Endothelial cell of umbilical vein (primary cell): ENCODE measurements at regions of chr5 and their contacts with region 1.

Region 1: GRCh38 chr5:124649491-124650146 is 96.8 kb downstream of the ZNF608 start:
- DNase-seq: peak; percentile 98
- H3K4me3 ChIP-seq: peak overlapping the region in 2 of 3 experiments; percentile 17 to 49
- H3K27ac ChIP-seq: peak overlapping the region; percentile 92
- H3K4me1 ChIP-seq: peaks cover 46% of the 10 kb centered on the region
- H3K27me3 ChIP-seq: no peaks in the 10 kb centered on the region
- CTCF ChIP-seq: no peak
- POLR2A ChIP-seq: peak; percentile 60

Region 2: DNA sequence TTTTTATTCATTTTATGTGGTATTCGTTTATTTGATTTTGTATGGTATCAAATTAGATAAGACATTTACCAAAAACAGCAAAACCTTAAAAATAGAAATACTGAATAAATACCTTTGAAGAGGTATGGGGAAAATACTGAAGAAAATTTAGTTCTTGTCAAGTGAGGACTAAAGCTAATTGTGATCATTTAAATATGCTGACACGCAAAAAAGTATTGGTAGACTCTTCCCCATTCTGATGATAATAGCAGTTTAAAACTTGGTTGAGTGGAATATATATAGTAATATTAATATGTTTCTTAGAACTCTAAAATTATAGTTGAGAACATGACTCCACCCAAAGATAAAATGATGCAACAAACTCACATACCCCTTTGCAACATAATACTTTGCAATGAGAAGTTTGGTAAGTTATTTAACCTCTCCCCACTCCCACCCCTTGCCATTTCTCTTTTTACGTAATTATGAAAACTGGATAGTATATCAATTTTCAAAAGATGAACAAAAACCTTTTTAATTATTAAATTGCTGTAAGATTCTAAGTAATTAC is 1834.3 kb before region 1 on chr5:
- CTCF ChIA-PET with region 1: no interaction called
- POLR2A ChIA-PET with region 1: no interaction called
- dilution Hi-C with region 1: no loop called
- intact Hi-C with region 1: no loop called
- DNase-seq: no peak
- H3K4me3 ChIP-seq: no peak overlapping the region
- H3K27ac ChIP-seq: no peak overlapping the region
- H3K4me1 ChIP-seq: no peaks in the 10 kb centered on the region
- H3K27me3 ChIP-seq: no peaks in the 10 kb centered on the region
- CTCF ChIP-seq: no peak
- POLR2A ChIP-seq: no peak

Region 3: GRCh38 chr5:123881759-123882244 is 767.8 kb before region 1 on chr5:
- CTCF ChIA-PET with region 1: no interaction called
- POLR2A ChIA-PET with region 1: no interaction called
- dilution Hi-C with region 1: no loop called
- intact Hi-C with region 1: loop called (anchors 2 kb)
- DNase-seq: peak; percentile 90
- H3K4me3 ChIP-seq: peak overlapping the region in 1 of 3 experiments; percentile 58
- H3K27ac ChIP-seq: peak overlapping the region; percentile 48
- H3K4me1 ChIP-seq: peaks cover 27% of the 10 kb centered on the region
- H3K27me3 ChIP-seq: peaks cover 3 to 7% of the 10 kb centered on the region in 2 experiments
- CTCF ChIP-seq: no peak
- POLR2A ChIP-seq: no peak

Region 4: DNA sequence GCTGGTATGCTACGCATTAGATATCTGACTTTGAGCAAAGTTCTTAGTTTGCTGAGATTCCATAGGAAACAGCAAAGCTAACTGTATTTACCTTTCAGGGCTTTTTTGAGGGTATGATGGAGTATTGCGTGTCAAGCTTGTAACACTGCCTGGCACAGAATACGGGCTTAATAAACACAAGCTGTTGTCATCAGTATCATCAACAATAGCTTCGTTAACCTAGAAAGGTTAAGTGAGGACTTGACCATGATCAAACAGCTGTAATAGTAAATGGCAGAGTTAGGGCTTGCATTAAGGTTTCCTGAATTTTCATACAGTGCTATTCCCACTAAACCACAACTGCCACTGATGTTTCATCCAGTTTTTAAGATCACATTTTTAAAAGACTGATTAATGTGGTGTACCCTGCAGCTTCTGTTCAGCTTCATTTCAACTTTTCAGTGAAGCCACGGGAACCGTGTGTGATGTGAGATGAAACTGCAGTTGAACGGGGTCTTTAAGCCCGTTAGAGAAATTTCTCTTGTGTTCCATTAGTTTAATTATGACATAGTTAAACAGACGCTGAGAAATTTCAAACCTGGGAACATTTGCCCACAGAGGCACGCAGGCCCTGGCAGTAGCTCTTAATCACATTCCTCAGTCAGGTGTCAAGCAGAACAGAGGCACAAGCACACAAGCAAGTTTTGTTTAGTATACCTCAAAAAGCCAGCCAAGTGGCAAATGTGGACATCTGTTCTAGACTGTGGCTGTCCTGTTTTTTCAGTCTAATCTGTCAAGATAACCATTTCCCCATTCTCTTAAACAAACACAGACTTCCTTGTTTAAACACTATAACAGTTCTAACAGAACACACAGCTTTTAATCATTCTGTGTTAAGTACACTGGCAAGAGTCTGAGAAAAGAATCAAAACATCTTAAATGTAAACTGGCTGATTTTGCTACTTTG is 50.3 kb before region 1 on chr5:
- CTCF ChIA-PET with region 1: interaction called, 14 read pairs
- POLR2A ChIA-PET with region 1: interaction called, 27 read pairs
- dilution Hi-C with region 1: no loop called
- intact Hi-C with region 1: loop called (anchors 1 kb)
- DNase-seq: peak; percentile 98
- H3K4me3 ChIP-seq: peak overlapping the region in 1 of 3 experiments; percentile 41
- H3K27ac ChIP-seq: peak overlapping the region; percentile 99
- H3K4me1 ChIP-seq: peaks cover 63% of the 10 kb centered on the region
- H3K27me3 ChIP-seq: no peaks in the 10 kb centered on the region
- CTCF ChIP-seq: no peak
- POLR2A ChIP-seq: peak; percentile 78

Region 5: DNA sequence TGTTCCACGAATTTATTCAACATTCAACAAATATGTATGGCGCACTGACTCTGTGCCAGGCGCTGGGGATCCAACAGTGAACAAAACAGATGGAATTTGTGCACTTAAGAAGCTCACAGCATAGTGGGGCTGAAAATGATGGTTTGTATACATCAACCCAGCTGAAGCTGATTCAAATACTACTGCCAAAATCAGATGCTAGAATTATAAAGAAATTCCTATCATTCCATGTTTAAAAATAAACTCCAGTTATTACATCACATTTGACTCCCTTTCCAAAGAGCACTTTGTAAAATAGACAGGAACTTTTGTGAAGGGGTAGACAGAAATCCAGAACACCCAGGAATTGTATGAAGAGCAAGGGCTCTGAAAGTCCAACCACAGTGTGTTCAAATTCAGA is 42.7 kb after region 1 on chr5:
- CTCF ChIA-PET with region 1: no interaction called
- POLR2A ChIA-PET with region 1: no interaction called
- dilution Hi-C with region 1: no loop called
- intact Hi-C with region 1: no loop called
- DNase-seq: no peak
- H3K4me3 ChIP-seq: no peak overlapping the region
- H3K27ac ChIP-seq: no peak overlapping the region
- H3K4me1 ChIP-seq: no peaks in the 10 kb centered on the region
- H3K27me3 ChIP-seq: no peaks in the 10 kb centered on the region
- CTCF ChIP-seq: no peak
- POLR2A ChIP-seq: no peak

Region 6: GRCh38 chr5:124948062-124948753 is 298.6 kb after region 1 on chr5:
- CTCF ChIA-PET with region 1: no interaction called
- POLR2A ChIA-PET with region 1: no interaction called
- dilution Hi-C with region 1: no loop called
- intact Hi-C with region 1: loop called (anchors 5 kb)
- DNase-seq: peak; percentile 90
- H3K4me3 ChIP-seq: no peak overlapping the region
- H3K27ac ChIP-seq: no peak overlapping the region
- H3K4me1 ChIP-seq: peaks cover 9% of the 10 kb centered on the region
- H3K27me3 ChIP-seq: no peaks in the 10 kb centered on the region
- CTCF ChIP-seq: no peak
- POLR2A ChIP-seq: no peak

Region 7: DNA sequence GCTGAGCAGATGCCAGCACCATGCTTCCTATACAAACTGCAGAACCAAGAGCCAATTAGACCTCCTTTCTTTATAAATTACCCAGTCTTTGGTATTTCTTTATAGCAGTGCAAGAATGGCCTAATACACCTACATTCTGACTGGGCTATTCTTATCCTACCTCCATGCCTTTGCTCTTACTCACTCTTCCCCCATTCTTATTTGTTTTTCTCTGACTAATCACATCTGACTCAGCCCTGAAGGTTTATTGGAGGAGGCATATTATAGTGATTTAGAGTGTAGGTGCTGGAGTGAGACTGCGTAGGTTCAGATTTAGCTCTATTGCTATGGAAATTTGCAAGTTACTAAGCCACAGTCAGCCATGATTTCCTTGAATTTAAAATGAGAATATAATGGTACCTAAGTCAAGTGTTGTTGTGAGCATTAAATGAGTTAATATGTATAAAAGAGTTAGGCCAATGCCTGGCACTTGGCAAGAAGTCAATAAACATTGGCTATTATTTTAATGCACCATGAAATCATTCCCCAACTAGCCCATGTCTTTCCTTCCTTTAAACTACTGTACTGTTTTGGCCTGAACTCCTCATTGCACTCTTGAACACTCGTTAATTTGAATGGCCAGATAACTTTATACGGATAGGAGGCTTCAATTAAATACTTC is 628.0 kb after region 1 on chr5:
- CTCF ChIA-PET with region 1: no interaction called
- POLR2A ChIA-PET with region 1: no interaction called
- dilution Hi-C with region 1: no loop called
- intact Hi-C with region 1: loop called (anchors 2 kb)
- DNase-seq: peak; percentile 93
- H3K4me3 ChIP-seq: no peak overlapping the region
- H3K27ac ChIP-seq: peak overlapping the region; percentile 85
- H3K4me1 ChIP-seq: peaks cover 46% of the 10 kb centered on the region
- H3K27me3 ChIP-seq: no peaks in the 10 kb centered on the region
- CTCF ChIP-seq: no peak
- POLR2A ChIP-seq: no peak

Region 8: GRCh38 chr5:125835293-125836172 is 1185.9 kb after region 1 on chr5:
- CTCF ChIA-PET with region 1: interaction called, 7 read pairs
- POLR2A ChIA-PET with region 1: no interaction called
- dilution Hi-C with region 1: no loop called
- intact Hi-C with region 1: loop called (anchors 2 kb)
- DNase-seq: peak; percentile 68
- H3K4me3 ChIP-seq: no peak overlapping the region
- H3K27ac ChIP-seq: no peak overlapping the region
- H3K4me1 ChIP-seq: no peaks in the 10 kb centered on the region
- H3K27me3 ChIP-seq: no peaks in the 10 kb centered on the region
- CTCF ChIP-seq: peak; percentile 60 to 73
- POLR2A ChIP-seq: no peak